ENCODE measurements at regions of chr3 and their contacts with region 1.

Region 1: GRCh38 chr3:101809178-101810021 is 30.4 kb downstream of the NXPE3 start:
- DNase-seq: peak; percentile 78 to 92 (median 91)
- H3K4me3 ChIP-seq: peak overlapping the region in 3 of 7 experiments; percentile 6 to 21 (median 16)
- H3K27ac ChIP-seq: peak overlapping the region; percentile 94 to 96
- H3K4me1 ChIP-seq: peaks cover 4 to 32% (median 16%) of the 10 kb centered on the region in 4 experiments
- H3K27me3 ChIP-seq: no peaks in the 10 kb centered on the region

Region 2: GRCh38 chr3:101821503-101821902 is 12.1 kb after region 1 on chr3:
- CTCF ChIA-PET with region 1: interaction called, 20 read pairs
- POLR2A ChIA-PET with region 1: no interaction called
- DNase-seq: no peak
- H3K4me3 ChIP-seq: no peak overlapping the region
- H3K27ac ChIP-seq: no peak overlapping the region
- H3K4me1 ChIP-seq: peaks cover 0 to 15% (median 3%) of the 10 kb centered on the region in 4 experiments
- H3K27me3 ChIP-seq: no peaks in the 10 kb centered on the region

Region 3: GRCh38 chr3:101827211-101828174 is 18.1 kb after region 1 on chr3:
- CTCF ChIA-PET with region 1: interaction called, 20 read pairs
- POLR2A ChIA-PET with region 1: no interaction called
- DNase-seq: peak; percentile 86 to 94 (median 93)
- H3K4me3 ChIP-seq: peak overlapping the region; percentile 45 to 90 (median 78)
- H3K27ac ChIP-seq: peak overlapping the region; percentile 81 to 86
- H3K4me1 ChIP-seq: peaks cover 13 to 28% (median 24%) of the 10 kb centered on the region in 4 experiments
- H3K27me3 ChIP-seq: no peaks in the 10 kb centered on the region

Region 4: GRCh38 chr3:101849051-101849720 is 39.8 kb after region 1 on chr3 and contains the start of gene NFKBIZ:
- CTCF ChIA-PET with region 1: interaction called, 40 read pairs
- POLR2A ChIA-PET with region 1: interaction called, 11 read pairs
- DNase-seq: peak; percentile 91 to 97 (median 97)
- H3K4me3 ChIP-seq: peak within 1 kb of the TSS; percentile 89 to 100 (median 94)
- H3K27ac ChIP-seq: peak within 1 kb of the TSS; percentile 94 to 97
- H3K4me1 ChIP-seq: peaks cover 14 to 41% (median 24%) of the 10 kb centered on the region in 4 experiments
- H3K27me3 ChIP-seq: no peaks in the 10 kb centered on the region

Region 5: GRCh38 chr3:102536456-102536855 is 727.1 kb after region 1 on chr3:
- CTCF ChIA-PET with region 1: interaction called, 19 read pairs
- POLR2A ChIA-PET with region 1: no interaction called
- DNase-seq: peak; percentile 40 to 60 (median 55)
- H3K4me3 ChIP-seq: no peak overlapping the region
- H3K27ac ChIP-seq: no peak overlapping the region
- H3K4me1 ChIP-seq: peaks cover 0 to 8% (median 3%) of the 10 kb centered on the region in 4 experiments
- H3K27me3 ChIP-seq: no peaks in the 10 kb centered on the region